HEK293 (cell line): ENCODE measurements at regions of chr20 and their contacts with region 1.

Region 1: GRCh38 chr20:3470627-3471396 is at the start of gene ATRN:
- H3K4me3 ChIP-seq: peak within 1 kb of the TSS; percentile 81
- H3K27ac ChIP-seq: peak within 1 kb of the TSS; percentile 73
- H3K4me1 ChIP-seq: peaks cover 6% of the 10 kb centered on the region; the same call in 1 of the 2 replicates
- CTCF ChIP-seq: no peak

Region 2: DNA sequence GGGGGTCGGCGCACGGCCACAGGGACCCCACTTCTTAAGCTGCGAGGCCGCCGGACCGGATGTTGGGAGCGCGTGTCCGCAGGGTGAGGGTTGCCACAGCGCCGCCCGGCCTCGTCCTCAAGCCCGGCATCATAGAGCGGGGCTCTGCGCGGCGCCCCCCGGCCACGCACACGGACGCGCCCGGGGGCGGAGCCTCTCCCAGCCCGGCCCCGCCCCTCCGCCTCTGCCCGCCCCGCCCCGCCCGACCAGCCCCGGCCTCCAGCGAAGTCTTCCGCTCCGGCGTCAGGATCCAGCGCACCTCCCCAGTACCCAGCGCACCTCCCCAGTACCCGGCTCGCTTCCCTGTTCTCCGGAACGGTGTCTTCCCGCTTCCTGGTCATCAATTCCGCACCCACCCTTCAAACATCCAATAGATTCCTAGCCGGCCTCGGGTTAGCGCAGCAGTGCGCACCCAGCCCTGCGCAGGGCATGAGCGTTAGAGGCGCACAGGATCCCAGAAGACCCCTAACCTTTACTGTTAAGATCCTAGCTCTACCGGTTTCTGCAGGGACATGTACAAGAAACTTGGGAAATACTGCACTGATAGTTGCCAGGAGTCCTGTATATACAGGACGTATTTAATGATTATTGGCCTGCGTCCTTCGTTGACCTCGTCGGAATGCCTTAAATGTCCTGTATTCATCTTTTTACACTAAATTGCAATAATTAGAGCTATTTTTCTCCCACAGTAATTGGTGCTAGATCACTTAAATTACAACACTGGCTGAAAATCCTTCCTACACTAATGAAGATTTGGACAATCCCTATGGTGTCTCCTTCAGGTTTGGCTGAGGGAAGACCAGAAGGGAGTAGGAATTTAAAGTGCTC is 62.8 kb before region 1 on chr20:
- CTCF ChIA-PET with region 1: interaction called, 3 read pairs
- POLR2A ChIA-PET with region 1: interaction called, 12 read pairs
- H3K4me3 ChIP-seq: peak overlapping the region; percentile 84
- H3K27ac ChIP-seq: peak overlapping the region; percentile 64
- H3K4me1 ChIP-seq: peaks cover 19% of the 10 kb centered on the region
- CTCF ChIP-seq: no peak

Region 3: GRCh38 chr20:3563548-3564177 is 92.9 kb after region 1 on chr20:
- CTCF ChIA-PET with region 1: no interaction called
- POLR2A ChIA-PET with region 1: no interaction called
- H3K4me3 ChIP-seq: no peak overlapping the region
- H3K27ac ChIP-seq: no peak overlapping the region
- H3K4me1 ChIP-seq: no peaks in the 10 kb centered on the region
- CTCF ChIP-seq: peak; percentile 60